Mammary epithelial cell (primary cell): ENCODE measurements at regions of chr22 and their contacts with region 1.

Region 1: GRCh38 chr22:40346178-40347118 is at the start of gene ADSL:
- DNase-seq: peak; percentile 88
- H3K4me3 ChIP-seq: peak within 1 kb of the TSS; percentile 77 to 84 (median 83)
- H3K27ac ChIP-seq: peak within 1 kb of the TSS; percentile 59
- H3K4me1 ChIP-seq: peaks cover 13% of the 10 kb centered on the region
- H3K27me3 ChIP-seq: no peaks in the 10 kb centered on the region
- CTCF ChIP-seq: peak in 1 of 2 donors; percentile 14
- total RNA-seq, gene ADSL: 67.5 to 78.0 TPM

Region 2: DNA sequence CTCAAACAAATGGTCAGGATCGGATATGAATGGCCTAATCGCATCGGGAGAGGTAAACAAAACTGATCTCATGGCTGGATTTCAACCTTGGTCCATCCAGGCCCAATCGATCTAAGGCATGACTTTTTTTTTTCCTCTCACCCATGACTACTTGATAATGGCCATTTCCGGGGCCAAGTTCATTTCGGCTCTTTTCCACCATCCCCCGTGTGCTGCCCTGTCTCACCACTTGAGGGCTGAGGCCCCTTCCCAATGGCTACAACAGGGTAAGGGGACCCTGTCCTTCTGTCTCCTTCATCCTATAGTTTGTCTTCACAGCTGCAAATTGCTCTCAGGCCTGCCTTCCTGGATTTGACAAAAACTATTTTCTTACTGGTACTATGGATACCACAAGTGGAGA is 418.9 kb before region 1 on chr22:
- CTCF ChIA-PET with region 1: no interaction called
- dilution Hi-C with region 1: no loop called
- in situ Hi-C with region 1: no loop called
- intact Hi-C with region 1: loop called (anchors 10 kb)
- DNase-seq: no peak
- H3K4me3 ChIP-seq: no peak overlapping the region
- H3K27ac ChIP-seq: no peak overlapping the region
- H3K4me1 ChIP-seq: peaks cover 18% of the 10 kb centered on the region
- H3K27me3 ChIP-seq: no peaks in the 10 kb centered on the region
- CTCF ChIP-seq: no peak

Region 3: GRCh38 chr22:40055143-40055883 is 291.1 kb before region 1 on chr22:
- CTCF ChIA-PET with region 1: no interaction called
- dilution Hi-C with region 1: loop called (anchors 25 kb)
- in situ Hi-C with region 1: no loop called
- intact Hi-C with region 1: no loop called
- DNase-seq: peak; percentile 35
- H3K4me3 ChIP-seq: no peak overlapping the region
- H3K27ac ChIP-seq: no peak overlapping the region
- H3K4me1 ChIP-seq: peaks cover 4% of the 10 kb centered on the region
- H3K27me3 ChIP-seq: no peaks in the 10 kb centered on the region
- CTCF ChIP-seq: no peak

Region 4: DNA sequence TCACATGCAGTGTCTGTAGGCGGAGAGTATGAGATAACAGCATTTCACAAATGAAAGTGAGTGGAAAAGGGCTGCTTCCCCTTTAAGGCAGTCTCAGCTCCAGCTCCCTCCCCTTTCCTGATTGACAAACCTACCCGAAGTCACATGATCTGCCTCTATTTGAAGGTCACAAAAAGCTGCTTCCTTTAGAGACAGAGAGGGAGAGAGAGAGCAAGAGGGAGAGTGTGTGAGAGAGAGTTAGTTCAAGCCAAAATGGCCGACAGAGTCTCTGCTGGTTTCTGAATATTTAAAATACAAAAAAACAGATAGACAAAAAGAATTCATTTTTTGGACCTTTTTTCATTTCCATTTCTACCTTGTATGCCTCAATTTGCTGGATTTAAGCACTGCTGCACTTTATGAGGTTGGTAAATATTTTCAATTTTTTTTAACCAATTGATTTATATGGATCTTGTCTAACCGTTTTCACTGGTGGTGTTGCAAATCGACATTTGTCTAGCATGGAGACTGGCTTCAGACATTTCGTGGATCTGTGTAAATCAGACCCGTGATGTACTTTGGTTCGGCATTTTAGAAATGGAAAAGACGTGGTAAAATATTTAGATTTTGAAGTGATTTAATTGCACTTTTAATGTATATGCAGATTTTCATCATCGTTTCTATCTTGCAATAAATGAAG is 168.6 kb before region 1 on chr22 and contains the start of gene TNRC6B:
- CTCF ChIA-PET with region 1: no interaction called
- dilution Hi-C with region 1: no loop called
- in situ Hi-C with region 1: no loop called
- intact Hi-C with region 1: loop called (anchors 1 kb)
- DNase-seq: peak; percentile 97
- H3K4me3 ChIP-seq: peak within 1 kb of the TSS; percentile 53 to 100 (median 100)
- H3K27ac ChIP-seq: peak within 1 kb of the TSS; percentile 90
- H3K4me1 ChIP-seq: peaks cover 26% of the 10 kb centered on the region
- H3K27me3 ChIP-seq: no peaks in the 10 kb centered on the region
- CTCF ChIP-seq: no peak
- total RNA-seq, gene TNRC6B: 25.2 to 27.3 TPM

Region 5: DNA sequence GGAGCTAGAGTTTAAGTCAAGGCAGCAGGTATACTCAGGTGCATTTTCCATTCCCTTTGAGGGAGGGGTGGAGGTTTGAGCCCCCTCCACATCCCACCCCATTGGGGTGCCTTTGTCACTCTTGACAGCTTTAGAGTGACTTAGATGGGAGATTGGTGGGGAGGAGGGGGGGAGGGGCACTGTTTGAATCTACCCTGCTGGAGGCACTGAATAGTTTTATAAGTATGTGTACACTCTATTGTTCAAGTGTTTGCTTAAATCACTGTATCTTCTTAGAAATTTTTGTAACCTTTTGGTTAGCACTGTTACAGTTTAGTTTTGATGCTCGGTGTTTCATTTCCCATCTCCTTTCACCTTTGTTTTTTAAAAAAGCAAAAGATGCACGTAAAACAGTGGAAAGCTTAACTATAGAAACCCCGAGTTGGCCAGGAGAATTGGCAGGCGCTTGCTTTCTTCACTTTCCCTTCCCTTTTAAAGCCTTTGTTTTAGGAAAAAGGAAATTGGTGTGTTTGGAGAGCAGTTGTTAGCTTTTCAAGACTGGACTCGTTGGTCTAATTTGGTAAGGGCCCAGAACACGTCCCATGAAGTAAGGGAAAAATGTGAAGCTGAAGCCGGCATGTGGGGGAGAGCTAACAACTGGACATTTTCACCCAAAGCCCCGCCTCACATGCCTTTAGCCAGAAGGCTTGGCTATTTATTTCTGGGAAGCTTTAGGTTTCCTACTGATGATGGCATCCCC is 126.0 kb before region 1 on chr22:
- CTCF ChIA-PET with region 1: interaction called, 7 read pairs
- dilution Hi-C with region 1: no loop called
- in situ Hi-C with region 1: no loop called
- intact Hi-C with region 1: loop called (anchors 10 kb)
- DNase-seq: peak; percentile 57
- H3K4me3 ChIP-seq: peak overlapping the region in 2 of 3 experiments; percentile 20 to 31
- H3K27ac ChIP-seq: peak overlapping the region; percentile 90
- H3K4me1 ChIP-seq: peaks cover 28% of the 10 kb centered on the region
- H3K27me3 ChIP-seq: no peaks in the 10 kb centered on the region
- CTCF ChIP-seq: peak in 1 of 2 donors; percentile 16